Activated CD4-positive, alpha-beta T cell treated with anti-CD3 and anti-CD28 coated beads for 36 hours (primary cell): ENCODE measurements at regions of chr14 and their contacts with region 1.

Region 1: DNA sequence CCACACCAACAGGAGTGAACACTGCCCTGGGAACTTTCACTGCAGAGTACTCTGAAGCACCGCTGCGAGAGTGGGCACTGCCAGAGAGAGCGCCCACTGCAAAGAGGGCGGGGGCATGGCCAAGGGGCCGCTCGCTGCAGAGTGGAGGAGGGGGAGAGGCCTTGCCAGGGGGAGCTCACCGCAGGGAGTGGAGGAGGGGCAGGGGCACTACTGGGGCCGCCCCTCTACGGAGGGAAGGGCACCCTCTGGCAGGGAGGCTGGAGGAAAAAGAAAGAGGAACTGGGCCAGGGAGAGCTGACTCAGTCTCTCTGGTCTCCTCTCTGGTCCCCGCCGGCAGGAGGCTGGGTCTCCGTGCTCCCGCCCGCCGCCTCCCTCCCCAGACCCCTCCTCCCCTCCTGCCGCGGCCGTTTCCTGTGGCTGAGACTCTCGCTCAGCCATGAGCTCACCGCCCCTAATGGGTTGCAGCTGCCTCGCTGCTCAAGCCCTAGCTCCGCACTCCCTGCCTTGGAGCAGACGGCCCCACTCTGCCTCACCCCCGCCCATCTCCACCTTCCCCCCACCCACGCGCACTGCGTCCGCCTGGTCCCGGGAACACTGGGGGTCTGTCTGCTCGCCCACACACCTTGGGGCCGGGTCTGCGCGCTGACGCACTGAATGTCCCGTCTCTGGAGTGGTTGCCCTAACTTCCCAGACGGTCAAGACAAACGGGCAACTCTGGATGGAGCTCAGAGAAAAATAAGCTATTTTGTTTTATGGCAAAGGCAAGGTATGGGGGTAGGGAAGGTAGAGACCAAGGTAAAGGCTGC is 1.3 kb downstream of the ARHGEF40 start:
- DNase-seq: peak; percentile 83
- ATAC-seq: peak; percentile 72
- H3K4me3 Mint-ChIP-seq: peak overlapping the region; percentile 63
- H3K27ac Mint-ChIP-seq: no peak overlapping the region
- H3K4me1 Mint-ChIP-seq: peaks cover 33% of the 10 kb centered on the region
- H3K27me3 Mint-ChIP-seq: peaks cover 54% of the 10 kb centered on the region

Region 2: DNA sequence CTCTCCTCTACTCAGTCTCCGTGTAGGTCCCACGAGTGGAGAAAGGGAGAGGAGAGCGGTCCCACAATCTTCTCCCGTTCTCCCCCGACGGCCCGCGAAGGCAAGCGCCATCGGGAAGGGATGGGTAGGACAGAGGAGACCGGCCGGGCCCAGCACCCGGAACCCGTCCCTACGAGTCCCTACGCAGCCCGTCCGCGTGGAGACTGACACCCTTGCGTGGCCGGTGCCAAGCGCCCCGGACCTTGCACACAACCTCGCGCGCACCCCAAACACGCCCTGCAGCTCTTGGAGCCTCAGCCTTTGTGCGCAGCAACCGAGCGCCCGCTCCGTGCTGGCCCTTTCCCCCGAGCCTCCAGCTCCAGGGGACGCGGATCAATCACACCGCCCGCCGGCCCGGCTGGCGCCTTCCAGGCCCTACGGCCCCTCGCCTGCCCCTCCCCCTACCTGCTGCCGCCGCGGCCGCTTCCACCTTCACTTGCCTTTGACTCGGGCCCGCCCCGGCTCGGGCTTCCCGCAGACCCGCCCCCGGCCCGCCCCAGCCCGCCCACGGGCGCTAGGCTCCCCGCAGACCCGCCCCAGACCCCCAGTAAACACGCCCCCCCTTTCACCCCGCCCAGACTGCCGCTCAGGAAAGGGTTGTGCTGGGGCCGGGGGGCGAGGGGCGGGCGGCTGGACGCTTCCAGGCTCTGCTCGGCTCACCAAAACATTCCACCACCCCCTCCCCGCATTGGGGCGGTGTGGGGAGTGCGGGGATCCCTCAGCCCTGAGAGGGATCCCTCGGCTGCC is 46.6 kb before region 1 on chr14 and contains the start of gene NDRG2:
- CTCF ChIA-PET with region 1: interaction called, 3 read pairs
- POLR2A ChIA-PET with region 1: no interaction called
- intact Hi-C with region 1: loop called in 1 of 2 experiments (anchors 2 kb)
- DNase-seq: peak; percentile 80
- ATAC-seq: peak; percentile 74
- H3K4me3 Mint-ChIP-seq: peak within 1 kb of the TSS; percentile 73
- H3K27ac Mint-ChIP-seq: peak within 1 kb of the TSS; percentile 55
- H3K4me1 Mint-ChIP-seq: peaks cover 16% of the 10 kb centered on the region
- H3K27me3 Mint-ChIP-seq: peaks cover 2% of the 10 kb centered on the region
- total RNA-seq, gene NDRG2: 5.5 to 7.0 TPM

Region 3: GRCh38 chr14:21092273-21093011 is 21.0 kb after region 1 on chr14:
- CTCF ChIA-PET with region 1: interaction called, 48 read pairs
- POLR2A ChIA-PET with region 1: interaction called, 3 read pairs
- intact Hi-C with region 1: loop called (anchors 1 to 2 kb)
- DNase-seq: peak; percentile 95
- ATAC-seq: peak; percentile 91
- H3K4me3 Mint-ChIP-seq: no peak overlapping the region
- H3K27ac Mint-ChIP-seq: no peak overlapping the region
- H3K4me1 Mint-ChIP-seq: peaks cover 17% of the 10 kb centered on the region
- H3K27me3 Mint-ChIP-seq: no peaks in the 10 kb centered on the region